ENCODE measurements at regions of chr17 and their contacts with region 1.

Region 1: GRCh38 chr17:8173056-8173870 is 2.9 kb downstream of the TMEM107 start:
- DNase-seq: peak; percentile 96 to 98 (median 97)
- H3K4me3 ChIP-seq: peak overlapping the region in 6 of 7 experiments; percentile 63 to 97 (median 70)
- H3K27ac ChIP-seq: peak overlapping the region; percentile 100
- H3K4me1 ChIP-seq: peaks cover 8 to 47% (median 33%) of the 10 kb centered on the region in 4 experiments
- H3K27me3 ChIP-seq: no peaks in the 10 kb centered on the region

Region 2: GRCh38 chr17:8151123-8151640 is 22.1 kb before region 1 on chr17:
- CTCF ChIA-PET with region 1: no interaction called
- POLR2A ChIA-PET with region 1: interaction called, 33 read pairs
- DNase-seq: peak; percentile 88 to 92 (median 90)
- H3K4me3 ChIP-seq: peak overlapping the region; percentile 61 to 94 (median 80)
- H3K27ac ChIP-seq: peak overlapping the region; percentile 85 to 92
- H3K4me1 ChIP-seq: peaks cover 12 to 62% (median 60%) of the 10 kb centered on the region in 4 experiments
- H3K27me3 ChIP-seq: no peaks in the 10 kb centered on the region

Region 3: DNA sequence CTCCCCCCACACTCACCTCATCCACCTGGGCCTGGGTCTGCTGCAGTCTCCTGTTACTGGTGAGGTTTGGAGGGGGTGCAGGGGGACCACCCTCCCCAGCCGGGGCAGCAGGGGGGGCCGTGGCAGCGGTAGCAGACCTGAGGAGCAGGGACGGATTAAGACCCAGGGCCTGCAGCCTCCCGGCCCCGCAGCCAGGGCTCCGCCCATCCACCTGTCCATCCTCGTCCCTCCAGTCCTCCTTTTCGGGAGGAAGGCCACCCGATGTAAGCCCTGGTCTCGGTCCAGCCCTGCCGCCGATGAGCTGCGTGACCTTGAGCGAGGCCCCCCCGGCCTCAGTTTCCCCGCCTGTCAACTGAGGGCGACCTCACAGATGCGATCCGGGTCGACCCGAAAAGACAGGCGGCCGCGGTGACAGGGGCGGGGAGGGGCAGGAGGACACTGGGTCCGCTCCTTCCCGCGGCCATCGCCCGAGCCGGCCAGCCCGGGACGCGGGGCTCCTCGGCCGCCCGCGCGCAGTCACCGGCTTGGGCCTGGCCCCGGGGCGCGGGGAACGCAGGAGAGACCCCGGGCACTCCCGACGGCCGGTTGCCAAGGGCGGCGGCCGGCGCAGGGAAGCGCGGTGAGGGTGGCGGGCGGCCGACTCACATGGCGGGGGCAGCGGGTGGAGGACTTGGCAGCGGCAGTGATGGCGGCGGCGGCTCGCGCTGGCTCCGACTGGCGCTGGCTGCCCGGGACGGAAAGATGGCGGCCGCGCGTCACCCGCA is 10.8 kb before region 1 on chr17 and contains the start of gene VAMP2:
- CTCF ChIA-PET with region 1: interaction called, 5 read pairs
- POLR2A ChIA-PET with region 1: interaction called, 44 read pairs
- DNase-seq: peak; percentile 62 to 80 (median 73)
- H3K4me3 ChIP-seq: peak within 1 kb of the TSS; percentile 74 to 98 (median 90)
- H3K27ac ChIP-seq: peak within 1 kb of the TSS; percentile 72 to 88
- H3K4me1 ChIP-seq: peaks cover 4 to 47% (median 40%) of the 10 kb centered on the region in 4 experiments
- H3K27me3 ChIP-seq: no peaks in the 10 kb centered on the region

Region 4: DNA sequence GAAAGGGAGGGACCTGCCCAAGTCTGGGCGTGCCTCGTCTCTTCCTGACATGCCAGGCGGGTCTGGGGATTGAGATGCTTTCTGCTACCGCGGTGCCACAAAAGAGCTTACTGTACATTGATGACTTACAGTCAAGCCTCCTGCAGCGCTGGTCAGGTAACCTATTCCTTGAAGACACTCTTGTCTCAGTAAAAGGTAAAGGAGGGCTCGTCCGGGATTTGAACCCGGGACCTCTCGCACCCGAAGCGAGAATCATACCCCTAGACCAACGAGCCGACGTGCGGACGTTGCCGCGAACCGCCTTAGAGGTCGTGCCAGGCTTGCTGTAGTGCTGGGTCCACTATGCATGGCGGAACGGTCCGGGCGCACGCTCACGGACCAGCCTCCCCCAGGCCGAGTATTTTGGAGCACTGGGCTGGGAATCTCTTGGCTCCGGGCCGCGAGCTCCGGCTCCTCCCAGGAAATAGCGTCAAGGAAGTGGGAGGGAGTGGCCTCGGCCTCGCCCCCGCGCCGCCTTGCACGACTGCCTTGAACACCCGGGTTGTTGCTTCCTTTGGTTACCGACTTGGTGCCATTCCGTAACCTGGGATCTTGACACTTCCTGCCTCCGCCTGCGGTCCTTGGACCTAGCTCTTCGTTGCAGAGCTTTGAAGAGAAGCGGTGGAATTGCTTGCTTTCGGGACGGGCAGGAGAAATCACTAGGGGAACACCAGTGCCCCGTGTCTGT is 49.5 kb after region 1 on chr17:
- CTCF ChIA-PET with region 1: interaction called, 4 read pairs
- POLR2A ChIA-PET with region 1: interaction called, 12 read pairs
- DNase-seq: peak; percentile 91 to 97 (median 96)
- H3K4me3 ChIP-seq: peak overlapping the region; percentile 53 to 98 (median 86)
- H3K27ac ChIP-seq: peak overlapping the region; percentile 87 to 98
- H3K4me1 ChIP-seq: peaks cover 2 to 38% (median 30%) of the 10 kb centered on the region in 4 experiments
- H3K27me3 ChIP-seq: no peaks in the 10 kb centered on the region

Region 5: GRCh38 chr17:8237175-8237574 is 63.9 kb after region 1 on chr17:
- CTCF ChIA-PET with region 1: no interaction called
- POLR2A ChIA-PET with region 1: no interaction called
- DNase-seq: no peak
- H3K4me3 ChIP-seq: no peak overlapping the region
- H3K27ac ChIP-seq: no peak overlapping the region
- H3K4me1 ChIP-seq: no peaks in the 10 kb centered on the region
- H3K27me3 ChIP-seq: no peaks in the 10 kb centered on the region

Measured in common myeloid progenitor, CD34-positive (primary cell).